WTC11 (cell line): ENCODE measurements at regions of chr16 and their contacts with region 1.

Region 1: GRCh38 chr16:48831076-48831722 is 221.2 kb upstream of the N4BP1 start:
- DNase-seq: peak; percentile 61
- ATAC-seq: peak; percentile 73
- H3K4me3 Mint-ChIP-seq: no peak overlapping the region
- H3K27ac Mint-ChIP-seq: no peak overlapping the region
- H3K4me1 Mint-ChIP-seq: peaks cover 9% of the 10 kb centered on the region
- H3K27me3 Mint-ChIP-seq: no peaks in the 10 kb centered on the region
- CTCF ChIP-seq: peak; percentile 58

Region 2: DNA sequence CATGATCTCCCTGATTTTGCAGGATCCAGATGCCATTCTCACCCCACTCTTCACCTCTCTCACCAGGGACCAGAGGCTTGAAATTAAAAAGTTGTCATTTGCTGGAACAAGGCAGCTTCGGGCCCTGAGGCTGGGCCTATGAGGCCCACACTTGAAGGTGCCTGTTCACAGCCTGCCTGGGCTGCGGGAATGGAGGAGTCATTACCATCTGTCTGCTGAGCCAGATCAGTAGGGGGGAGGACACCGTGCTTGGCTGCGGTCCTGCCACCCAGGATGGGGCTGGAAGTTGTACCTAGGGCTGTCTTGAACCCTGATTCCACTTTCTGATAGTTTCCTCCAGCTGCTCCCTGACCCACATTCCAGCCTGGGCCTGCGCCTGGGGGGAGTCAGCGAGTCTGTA is 12.9 kb before region 1 on chr16:
- CTCF ChIA-PET with region 1: interaction called, 13 read pairs
- POLR2A ChIA-PET with region 1: no interaction called
- DNase-seq: no peak
- ATAC-seq: no peak
- H3K4me3 Mint-ChIP-seq: no peak overlapping the region
- H3K27ac Mint-ChIP-seq: no peak overlapping the region
- H3K4me1 Mint-ChIP-seq: no peaks in the 10 kb centered on the region
- H3K27me3 Mint-ChIP-seq: peaks cover 3% of the 10 kb centered on the region
- CTCF ChIP-seq: no peak

Region 3: GRCh38 chr16:48845261-48845660 is 14.1 kb after region 1 on chr16:
- CTCF ChIA-PET with region 1: interaction called, 14 read pairs
- POLR2A ChIA-PET with region 1: no interaction called
- DNase-seq: no peak
- ATAC-seq: no peak
- H3K4me3 Mint-ChIP-seq: no peak overlapping the region
- H3K27ac Mint-ChIP-seq: no peak overlapping the region
- H3K4me1 Mint-ChIP-seq: no peaks in the 10 kb centered on the region
- H3K27me3 Mint-ChIP-seq: peaks cover 3% of the 10 kb centered on the region; the same call in 1 of the 2 replicates
- CTCF ChIP-seq: no peak

Region 4: GRCh38 chr16:48901712-48902374 is 70.6 kb after region 1 on chr16:
- CTCF ChIA-PET with region 1: interaction called, 12 read pairs
- POLR2A ChIA-PET with region 1: no interaction called
- DNase-seq: peak; percentile 16
- ATAC-seq: peak; percentile 44; the same call in 1 of the 2 replicates
- H3K4me3 Mint-ChIP-seq: no peak overlapping the region
- H3K27ac Mint-ChIP-seq: no peak overlapping the region
- H3K4me1 Mint-ChIP-seq: peaks cover 20% of the 10 kb centered on the region
- H3K27me3 Mint-ChIP-seq: no peaks in the 10 kb centered on the region
- CTCF ChIP-seq: no peak

Region 5: GRCh38 chr16:49081554-49081953 is 250.4 kb after region 1 on chr16:
- CTCF ChIA-PET with region 1: no interaction called
- POLR2A ChIA-PET with region 1: no interaction called
- DNase-seq: no peak
- ATAC-seq: no peak
- H3K4me3 Mint-ChIP-seq: no peak overlapping the region
- H3K27ac Mint-ChIP-seq: no peak overlapping the region
- H3K4me1 Mint-ChIP-seq: no peaks in the 10 kb centered on the region
- H3K27me3 Mint-ChIP-seq: no peaks in the 10 kb centered on the region
- CTCF ChIP-seq: no peak